ENCODE measurements at regions of chr19 and their contacts with region 1.

Region 1: GRCh38 chr19:15836595-15837337 is 21.3 kb upstream of the OR10H1 start:
- DNase-seq: peak; percentile 96 to 98 (median 96)
- ATAC-seq: peak; percentile 93
- H3K4me3 ChIP-seq: peak overlapping the region; percentile 66
- H3K27ac ChIP-seq: peak overlapping the region; percentile 99
- H3K4me1 ChIP-seq: peaks cover 25 to 53% of the 10 kb centered on the region in 2 experiments
- H3K27me3 ChIP-seq: no peaks in the 10 kb centered on the region
- CTCF ChIP-seq: no peak
- EP300 ChIP-seq: no peak
- POLR2A ChIP-seq: peak; percentile 83
- RAD21 ChIP-seq: peak in 1 of 2 experiments; percentile 15; a peak in 1 of 4 replicates

Region 2: DNA sequence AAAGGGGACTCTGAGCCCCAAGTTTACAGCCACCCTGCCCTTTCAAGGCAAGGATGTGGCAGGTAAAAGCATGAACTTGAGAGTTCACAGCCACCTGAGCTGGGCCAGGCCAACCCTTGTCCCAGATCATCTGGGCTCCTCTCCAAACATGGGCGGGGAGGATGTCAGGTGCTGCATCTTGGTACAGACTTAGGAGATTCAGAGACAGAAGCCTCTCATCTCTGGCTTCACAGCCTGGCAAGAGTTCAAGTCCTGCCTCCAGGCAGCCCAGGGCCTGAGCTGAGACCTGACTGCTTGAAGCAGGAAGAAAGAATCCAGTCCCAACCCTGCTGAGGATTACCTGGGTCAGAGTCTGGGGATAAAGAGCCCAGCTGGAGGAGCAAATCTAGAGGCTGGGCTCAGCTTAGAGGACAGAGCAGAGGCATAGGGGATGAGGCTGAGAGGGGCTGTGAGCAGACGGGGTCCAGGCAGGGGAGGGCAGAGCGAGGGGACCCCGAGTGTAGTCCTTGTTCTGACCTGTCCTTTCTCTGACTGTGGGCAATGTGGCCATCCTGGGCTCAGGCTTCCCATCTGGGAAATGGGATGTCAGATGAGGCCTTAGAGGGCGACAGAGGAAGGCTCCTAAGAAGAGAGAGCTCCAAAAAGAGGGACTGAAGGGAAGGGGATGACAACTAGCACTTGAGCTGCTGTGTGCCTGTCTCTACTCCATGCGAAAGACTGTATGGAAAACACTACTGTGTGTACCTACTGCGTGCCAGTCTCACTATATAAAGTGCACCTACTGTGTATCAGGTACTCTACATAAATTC is 56.0 kb before region 1 on chr19:
- CTCF ChIA-PET with region 1: no interaction called
- POLR2A ChIA-PET with region 1: no interaction called
- in situ Hi-C with region 1: no loop called
- intact Hi-C with region 1: no loop called
- DNase-seq: no peak
- ATAC-seq: no peak
- H3K4me3 ChIP-seq: no peak overlapping the region
- H3K27ac ChIP-seq: no peak overlapping the region
- H3K4me1 ChIP-seq: no peaks in the 10 kb centered on the region; a peak in 1 of 5 replicates
- H3K27me3 ChIP-seq: no peaks in the 10 kb centered on the region; a peak in 1 of 5 replicates
- CTCF ChIP-seq: no peak
- EP300 ChIP-seq: no peak
- POLR2A ChIP-seq: no peak
- RAD21 ChIP-seq: no peak

Region 3: GRCh38 chr19:15820646-15821045 is 16.1 kb before region 1 on chr19:
- CTCF ChIA-PET with region 1: no interaction called
- POLR2A ChIA-PET with region 1: interaction called, 14 read pairs
- in situ Hi-C with region 1: no loop called
- intact Hi-C with region 1: no loop called
- DNase-seq: no peak
- ATAC-seq: no peak
- H3K4me3 ChIP-seq: no peak overlapping the region
- H3K27ac ChIP-seq: no peak overlapping the region
- H3K4me1 ChIP-seq: no peaks in the 10 kb centered on the region
- H3K27me3 ChIP-seq: peaks cover 0 to 2% of the 10 kb centered on the region in 2 experiments; a peak in 2 of 5 replicates
- CTCF ChIP-seq: no peak
- EP300 ChIP-seq: no peak
- POLR2A ChIP-seq: no peak
- RAD21 ChIP-seq: no peak

Measured in K562 (cell line).